ENCODE measurements at regions of chr1 and their contacts with region 1.

Region 1: GRCh38 chr1:157011845-157012244 is 33.7 kb downstream of the ARHGEF11 start:
- DNase-seq: no peak
- ATAC-seq: no peak
- H3K4me3 Mint-ChIP-seq: no peak overlapping the region
- H3K27ac Mint-ChIP-seq: no peak overlapping the region
- H3K4me1 Mint-ChIP-seq: no peaks in the 10 kb centered on the region
- H3K27me3 Mint-ChIP-seq: peaks cover 20% of the 10 kb centered on the region
- CTCF ChIP-seq: no peak

Region 2: DNA sequence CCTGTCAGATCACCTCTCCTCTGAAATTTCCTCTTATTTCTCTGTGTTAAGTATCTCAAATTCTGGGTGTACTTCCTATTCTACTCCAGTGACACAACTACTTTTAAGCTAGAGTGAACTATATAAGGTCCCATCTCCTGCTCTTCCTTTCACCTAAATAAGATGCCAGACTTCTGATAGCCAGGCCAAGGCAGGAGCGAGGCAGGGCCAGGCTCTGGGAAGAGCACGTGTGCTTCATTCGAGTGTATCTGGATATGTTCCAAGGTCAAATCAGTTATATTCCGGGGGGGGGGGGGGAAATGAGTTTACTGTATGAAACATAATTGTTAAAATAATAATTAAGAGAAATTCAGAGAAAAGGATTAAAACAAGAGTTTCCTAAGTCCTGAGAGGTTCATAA is 31.3 kb before region 1 on chr1:
- CTCF ChIA-PET with region 1: no interaction called
- POLR2A ChIA-PET with region 1: no interaction called
- intact Hi-C with region 1: loop called (anchors 1 kb)
- DNase-seq: no peak
- ATAC-seq: no peak
- H3K4me3 Mint-ChIP-seq: no peak overlapping the region
- H3K27ac Mint-ChIP-seq: no peak overlapping the region
- H3K4me1 Mint-ChIP-seq: no peaks in the 10 kb centered on the region
- H3K27me3 Mint-ChIP-seq: peaks cover 31% of the 10 kb centered on the region
- CTCF ChIP-seq: no peak